ENCODE measurements at regions of chr6 and their contacts with region 1.

Region 1: GRCh38 chr6:21593412-21593926 is at the start of gene SOX4:
- DNase-seq: peak; percentile 95
- H3K4me3 ChIP-seq: peak within 1 kb of the TSS; percentile 85 to 98 (median 97)
- H3K27ac ChIP-seq: peak within 1 kb of the TSS; percentile 64
- H3K4me1 ChIP-seq: peaks cover 13% of the 10 kb centered on the region
- H3K27me3 ChIP-seq: no peaks in the 10 kb centered on the region
- CTCF ChIP-seq: no peak
- total RNA-seq, gene SOX4: 22.3 to 64.8 TPM

Region 2: GRCh38 chr6:20564269-20564668 is 1029.2 kb before region 1 on chr6:
- CTCF ChIA-PET with region 1: interaction called, 3 read pairs
- dilution Hi-C with region 1: no loop called
- in situ Hi-C with region 1: loop called (anchors 10 kb)
- intact Hi-C with region 1: loop called (anchors 1 kb)
- DNase-seq: no peak
- H3K4me3 ChIP-seq: no peak overlapping the region
- H3K27ac ChIP-seq: no peak overlapping the region
- H3K4me1 ChIP-seq: peaks cover 7% of the 10 kb centered on the region
- H3K27me3 ChIP-seq: no peaks in the 10 kb centered on the region
- CTCF ChIP-seq: peak; percentile 45 to 48

Region 3: DNA sequence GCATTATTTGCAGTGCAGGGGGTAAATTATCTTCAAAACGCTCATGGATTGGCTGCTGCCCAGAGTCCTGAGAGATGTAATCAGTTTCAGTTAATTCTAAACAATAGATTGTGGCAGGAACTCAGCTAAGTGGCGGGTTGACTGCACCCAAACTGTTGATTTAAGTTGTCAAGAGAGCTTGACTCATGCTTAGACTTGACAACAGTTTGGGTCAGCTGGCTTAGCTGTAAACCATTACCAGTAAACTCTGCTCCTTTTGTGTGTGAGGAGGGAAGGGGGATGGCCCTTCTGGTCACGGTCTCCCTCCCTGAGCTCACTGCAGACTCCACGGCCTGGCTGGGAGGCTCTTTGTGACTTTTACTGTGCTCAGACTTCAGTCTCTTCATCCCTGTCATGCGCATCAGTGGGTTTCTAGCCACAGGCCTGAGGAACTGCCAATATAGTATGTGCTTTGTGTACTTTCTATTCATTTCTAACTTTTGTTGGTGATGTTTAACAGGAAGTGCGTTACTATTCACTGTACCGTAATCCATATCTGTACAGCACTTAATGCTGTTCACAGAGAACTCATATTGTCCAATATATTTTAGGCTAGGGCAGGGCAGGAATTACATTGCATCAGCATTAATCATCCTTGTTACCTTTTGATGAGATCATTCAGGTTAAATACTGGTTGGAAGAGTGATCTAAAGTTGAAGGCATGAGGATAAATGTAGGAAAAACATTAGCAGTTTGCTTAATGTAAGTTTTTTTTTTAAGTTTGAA is 570.9 kb before region 1 on chr6:
- CTCF ChIA-PET with region 1: no interaction called
- dilution Hi-C with region 1: no loop called
- in situ Hi-C with region 1: no loop called
- intact Hi-C with region 1: loop called (anchors 1 kb)
- DNase-seq: peak; percentile 96
- H3K4me3 ChIP-seq: no peak overlapping the region
- H3K27ac ChIP-seq: peak overlapping the region; percentile 98
- H3K4me1 ChIP-seq: peaks cover 19% of the 10 kb centered on the region
- H3K27me3 ChIP-seq: no peaks in the 10 kb centered on the region
- CTCF ChIP-seq: no peak

Region 4: GRCh38 chr6:21634582-21634981 is 41.1 kb after region 1 on chr6:
- CTCF ChIA-PET with region 1: no interaction called
- dilution Hi-C with region 1: no loop called
- in situ Hi-C with region 1: no loop called
- intact Hi-C with region 1: loop called (anchors 5 kb)
- DNase-seq: peak; percentile 93
- H3K4me3 ChIP-seq: no peak overlapping the region
- H3K27ac ChIP-seq: peak overlapping the region; percentile 67
- H3K4me1 ChIP-seq: peaks cover 12% of the 10 kb centered on the region
- H3K27me3 ChIP-seq: no peaks in the 10 kb centered on the region
- CTCF ChIP-seq: no peak

Region 5: GRCh38 chr6:22053391-22053997 is 460.0 kb after region 1 on chr6:
- CTCF ChIA-PET with region 1: no interaction called
- dilution Hi-C with region 1: no loop called
- in situ Hi-C with region 1: no loop called
- intact Hi-C with region 1: loop called (anchors 10 kb)
- DNase-seq: no peak
- H3K4me3 ChIP-seq: no peak overlapping the region
- H3K27ac ChIP-seq: no peak overlapping the region
- H3K4me1 ChIP-seq: peaks cover under 1% of the 10 kb centered on the region
- H3K27me3 ChIP-seq: no peaks in the 10 kb centered on the region
- CTCF ChIP-seq: no peak

Region 6: GRCh38 chr6:22332711-22333110 is 739.2 kb after region 1 on chr6:
- CTCF ChIA-PET with region 1: no interaction called
- dilution Hi-C with region 1: no loop called
- in situ Hi-C with region 1: no loop called
- intact Hi-C with region 1: loop called (anchors 10 kb)
- DNase-seq: no peak
- H3K4me3 ChIP-seq: no peak overlapping the region
- H3K27ac ChIP-seq: no peak overlapping the region
- H3K4me1 ChIP-seq: no peaks in the 10 kb centered on the region
- H3K27me3 ChIP-seq: no peaks in the 10 kb centered on the region
- CTCF ChIP-seq: no peak

Region 7: DNA sequence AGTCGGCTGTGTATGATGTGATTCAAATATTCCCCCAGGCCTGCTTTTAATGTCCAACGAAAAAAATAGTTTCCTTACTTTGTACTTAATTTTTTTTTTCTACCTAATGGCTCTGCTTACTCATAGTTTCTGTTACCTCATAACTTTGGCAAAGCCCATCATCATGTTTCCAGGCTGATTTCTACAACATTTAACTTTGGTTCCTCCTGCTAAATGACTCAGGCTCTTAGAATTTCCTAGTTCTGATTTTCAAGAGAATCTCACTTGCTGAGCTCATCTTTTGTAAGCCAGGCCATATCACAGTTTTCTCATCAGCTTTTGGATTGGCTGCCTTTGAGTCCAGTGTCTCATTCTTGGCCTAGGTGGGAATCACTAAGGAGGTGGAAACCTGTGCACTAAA is 1299.0 kb after region 1 on chr6:
- CTCF ChIA-PET with region 1: interaction called, 11 read pairs
- dilution Hi-C with region 1: no loop called
- in situ Hi-C with region 1: no loop called
- intact Hi-C with region 1: no loop called
- DNase-seq: peak; percentile 98
- H3K4me3 ChIP-seq: no peak overlapping the region
- H3K27ac ChIP-seq: peak overlapping the region; percentile 99
- H3K4me1 ChIP-seq: peaks cover 20% of the 10 kb centered on the region
- H3K27me3 ChIP-seq: no peaks in the 10 kb centered on the region
- CTCF ChIP-seq: no peak

Measured in mammary epithelial cell (primary cell).